ENCODE measurements at regions of chrX and their contacts with region 1.

Region 1: DNA sequence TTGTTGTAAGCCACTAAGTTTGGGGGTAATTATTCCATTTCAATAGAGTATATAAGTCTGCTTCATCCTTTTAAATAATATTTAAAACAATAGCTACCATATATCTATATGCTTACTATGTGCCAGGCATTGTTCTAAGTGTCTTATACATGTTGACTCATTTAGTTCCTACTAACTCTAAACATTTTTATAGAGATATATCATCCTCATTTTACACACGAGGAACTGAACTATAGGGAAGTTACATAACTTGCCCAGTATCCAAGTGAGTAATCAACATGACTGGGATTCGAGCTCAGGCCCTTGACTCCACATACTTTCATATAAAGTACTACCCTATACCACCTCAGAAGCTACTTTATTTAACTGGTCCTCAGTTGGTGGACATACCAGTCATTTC is 175.3 kb upstream of the RAI2 start:
- DNase-seq: no peak
- ATAC-seq: no peak

Region 2: DNA sequence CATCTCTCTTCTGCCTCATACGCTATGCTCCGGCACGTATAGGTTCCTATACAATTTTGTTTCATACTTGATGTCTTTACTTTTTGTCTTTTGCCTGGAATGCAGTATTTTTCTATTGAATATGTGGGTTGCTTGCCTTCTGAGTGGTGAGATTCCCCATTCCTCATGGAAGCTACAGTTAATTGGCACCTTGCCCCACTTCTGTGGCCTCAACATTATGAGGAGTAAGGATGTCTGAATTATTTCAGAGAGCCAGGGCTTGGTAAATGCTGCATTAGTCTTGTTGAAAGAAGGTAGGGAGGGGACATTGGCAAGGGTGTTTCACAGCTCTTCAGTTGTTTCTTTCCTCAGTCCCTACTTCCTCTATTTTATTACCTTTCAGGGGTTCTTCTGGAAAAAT is 412.0 kb after region 1 on chrX:
- intact Hi-C with region 1: loop called (anchors 5 kb)
- DNase-seq: no peak
- ATAC-seq: no peak

Region 3: DNA sequence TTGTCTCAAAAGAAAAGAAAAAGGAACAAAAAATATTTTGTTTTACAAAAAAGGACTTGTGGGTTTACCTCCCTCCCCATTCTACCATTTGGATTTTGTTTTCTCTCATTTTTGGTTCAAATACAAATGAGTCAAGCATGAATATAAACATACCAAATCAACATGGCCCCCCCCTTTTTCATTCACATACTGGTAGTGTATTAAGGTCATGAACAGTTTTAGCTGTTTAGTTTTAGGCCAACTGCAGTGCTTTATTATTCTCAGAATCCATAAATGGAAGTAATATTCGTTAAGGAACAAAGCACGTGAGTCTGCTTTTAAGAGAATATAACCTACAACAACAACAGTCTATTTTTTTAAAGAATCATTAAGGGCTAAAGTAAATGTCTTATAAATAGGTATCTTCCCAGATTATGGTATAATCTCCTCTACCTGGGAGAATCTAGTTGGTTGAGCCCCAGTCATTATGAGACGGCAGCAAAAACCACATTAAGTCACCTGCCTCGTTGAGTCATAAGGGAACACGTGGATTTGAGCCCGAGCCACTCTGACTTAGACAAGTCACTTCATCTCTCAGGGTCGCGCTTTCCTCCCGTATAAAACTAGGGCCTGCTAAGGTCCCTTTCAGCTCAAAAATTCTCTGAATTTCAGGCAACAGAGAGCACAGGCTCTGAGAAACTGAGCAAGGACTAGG is 1927.8 kb after region 1 on chrX:
- intact Hi-C with region 1: no loop called
- DNase-seq: no peak
- ATAC-seq: no peak